A673 (cell line): ENCODE measurements at regions of chr13 and their contacts with region 1.

Region 1: GRCh38 chr13:99176309-99177276 is 24.1 kb upstream of the UBAC2 start:
- DNase-seq: peak; percentile 69
- H3K4me3 ChIP-seq: no peak overlapping the region
- H3K27ac ChIP-seq: no peak overlapping the region
- H3K4me1 ChIP-seq: no peaks in the 10 kb centered on the region
- H3K27me3 ChIP-seq: no peaks in the 10 kb centered on the region
- CTCF ChIP-seq: peak; percentile 90

Region 2: DNA sequence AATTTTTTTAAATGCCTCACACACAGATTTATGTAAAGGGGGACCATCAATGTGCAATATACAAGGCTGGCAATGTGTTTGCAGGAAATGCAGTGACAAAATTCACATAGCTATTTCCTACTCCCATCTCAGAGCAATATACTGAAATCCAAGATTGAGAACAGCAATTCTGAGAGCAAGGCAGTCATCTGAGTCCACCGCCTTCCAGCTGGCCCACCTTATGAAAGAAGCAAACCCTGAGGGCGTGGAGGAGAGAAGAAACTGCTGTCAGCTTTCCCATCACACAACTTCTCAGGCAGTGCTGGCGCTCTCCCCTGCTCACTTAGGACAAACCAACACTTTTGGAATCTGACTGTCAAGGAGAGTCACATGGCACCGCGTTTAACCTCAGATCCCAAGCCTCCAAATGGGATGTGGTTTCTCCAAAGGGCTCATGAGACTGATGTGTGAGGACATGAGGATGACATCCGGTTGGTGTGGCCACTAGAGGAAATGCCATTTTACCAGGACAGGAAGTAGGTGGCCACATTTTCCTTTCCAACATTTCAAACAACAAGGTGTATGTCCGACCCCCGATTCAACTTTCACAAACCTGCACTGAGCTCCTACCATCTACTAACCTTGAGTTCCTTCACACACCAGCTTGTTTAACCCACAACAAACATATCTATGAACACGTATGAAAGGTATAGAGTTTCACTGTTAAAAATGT is 195.1 kb before region 1 on chr13:
- CTCF ChIA-PET with region 1: no interaction called
- POLR2A ChIA-PET with region 1: no interaction called
- intact Hi-C with region 1: no loop called
- DNase-seq: no peak
- H3K4me3 ChIP-seq: no peak overlapping the region
- H3K27ac ChIP-seq: no peak overlapping the region
- H3K4me1 ChIP-seq: peaks cover 14% of the 10 kb centered on the region
- H3K27me3 ChIP-seq: no peaks in the 10 kb centered on the region
- CTCF ChIP-seq: no peak

Region 3: GRCh38 chr13:99264051-99264450 is 87.5 kb after region 1 on chr13:
- CTCF ChIA-PET with region 1: interaction called, 13 read pairs
- POLR2A ChIA-PET with region 1: no interaction called
- intact Hi-C with region 1: loop called (anchors 1 kb)
- DNase-seq: no peak
- H3K4me3 ChIP-seq: no peak overlapping the region
- H3K27ac ChIP-seq: no peak overlapping the region
- H3K4me1 ChIP-seq: no peaks in the 10 kb centered on the region
- H3K27me3 ChIP-seq: no peaks in the 10 kb centered on the region
- CTCF ChIP-seq: no peak

Region 4: DNA sequence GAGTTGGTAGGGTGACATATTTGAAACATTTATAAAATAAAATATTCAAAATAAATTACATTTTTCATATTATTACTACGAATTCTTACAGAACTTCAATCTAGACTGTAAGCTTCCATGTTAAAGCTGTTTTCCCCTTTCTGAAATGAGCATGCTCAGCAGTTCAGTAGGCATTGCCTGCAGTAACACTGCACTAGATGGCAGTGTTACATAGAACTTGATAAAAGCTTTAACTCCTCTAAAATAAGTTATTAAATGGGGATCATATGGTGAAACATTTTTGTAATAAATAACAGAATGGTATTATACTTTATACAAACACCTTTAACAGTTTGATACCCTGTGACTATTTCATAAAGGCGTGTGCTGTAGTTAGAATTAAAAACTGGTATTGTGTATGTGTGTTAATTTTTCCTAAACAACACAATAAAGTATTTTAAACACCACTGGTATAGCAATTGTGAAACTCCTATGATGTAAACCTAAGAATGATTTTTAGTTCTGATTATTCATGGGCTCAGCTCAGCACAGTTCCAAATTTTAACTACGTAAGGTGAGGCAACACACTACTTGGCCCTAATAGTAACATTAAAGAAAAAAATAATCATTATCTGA is 93.1 kb after region 1 on chr13:
- CTCF ChIA-PET with region 1: interaction called, 13 read pairs
- POLR2A ChIA-PET with region 1: no interaction called
- intact Hi-C with region 1: loop called (anchors 1 kb)
- DNase-seq: peak; percentile 51
- H3K4me3 ChIP-seq: no peak overlapping the region
- H3K27ac ChIP-seq: no peak overlapping the region
- H3K4me1 ChIP-seq: no peaks in the 10 kb centered on the region
- H3K27me3 ChIP-seq: no peaks in the 10 kb centered on the region
- CTCF ChIP-seq: peak; percentile 68

Region 5: GRCh38 chr13:99436686-99437416 is 260.3 kb after region 1 on chr13:
- CTCF ChIA-PET with region 1: interaction called, 6 read pairs
- POLR2A ChIA-PET with region 1: interaction called, 6 read pairs
- intact Hi-C with region 1: loop called (anchors 1 kb)
- DNase-seq: peak; percentile 91
- H3K4me3 ChIP-seq: peak overlapping the region; percentile 12
- H3K27ac ChIP-seq: no peak overlapping the region
- H3K4me1 ChIP-seq: no peaks in the 10 kb centered on the region
- H3K27me3 ChIP-seq: no peaks in the 10 kb centered on the region
- CTCF ChIP-seq: peak; percentile 100

Region 6: DNA sequence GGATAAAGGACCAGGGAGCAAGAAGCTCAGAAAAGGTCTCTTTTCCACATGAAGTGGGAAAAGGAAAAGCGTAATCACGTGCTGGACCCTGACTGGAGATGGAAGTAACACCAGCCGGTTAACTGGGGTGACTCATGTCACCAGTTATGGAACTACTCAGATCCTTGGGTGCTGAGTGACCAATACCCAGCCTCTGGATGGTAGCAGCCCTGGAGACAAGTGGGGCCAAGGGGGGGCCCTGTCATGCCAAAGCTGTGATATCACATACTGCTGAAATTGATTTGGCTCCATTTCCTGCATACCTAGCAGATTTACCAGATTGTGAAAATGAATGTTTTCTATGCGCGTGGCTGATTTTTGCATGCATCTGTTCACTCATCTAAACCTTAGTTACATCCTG is 636.0 kb after region 1 on chr13:
- CTCF ChIA-PET with region 1: no interaction called
- POLR2A ChIA-PET with region 1: no interaction called
- intact Hi-C with region 1: no loop called
- DNase-seq: no peak
- H3K4me3 ChIP-seq: no peak overlapping the region
- H3K27ac ChIP-seq: no peak overlapping the region
- H3K4me1 ChIP-seq: no peaks in the 10 kb centered on the region
- H3K27me3 ChIP-seq: no peaks in the 10 kb centered on the region
- CTCF ChIP-seq: no peak